ENCODE measurements at regions of chr15 and their contacts with region 1.

Region 1: DNA sequence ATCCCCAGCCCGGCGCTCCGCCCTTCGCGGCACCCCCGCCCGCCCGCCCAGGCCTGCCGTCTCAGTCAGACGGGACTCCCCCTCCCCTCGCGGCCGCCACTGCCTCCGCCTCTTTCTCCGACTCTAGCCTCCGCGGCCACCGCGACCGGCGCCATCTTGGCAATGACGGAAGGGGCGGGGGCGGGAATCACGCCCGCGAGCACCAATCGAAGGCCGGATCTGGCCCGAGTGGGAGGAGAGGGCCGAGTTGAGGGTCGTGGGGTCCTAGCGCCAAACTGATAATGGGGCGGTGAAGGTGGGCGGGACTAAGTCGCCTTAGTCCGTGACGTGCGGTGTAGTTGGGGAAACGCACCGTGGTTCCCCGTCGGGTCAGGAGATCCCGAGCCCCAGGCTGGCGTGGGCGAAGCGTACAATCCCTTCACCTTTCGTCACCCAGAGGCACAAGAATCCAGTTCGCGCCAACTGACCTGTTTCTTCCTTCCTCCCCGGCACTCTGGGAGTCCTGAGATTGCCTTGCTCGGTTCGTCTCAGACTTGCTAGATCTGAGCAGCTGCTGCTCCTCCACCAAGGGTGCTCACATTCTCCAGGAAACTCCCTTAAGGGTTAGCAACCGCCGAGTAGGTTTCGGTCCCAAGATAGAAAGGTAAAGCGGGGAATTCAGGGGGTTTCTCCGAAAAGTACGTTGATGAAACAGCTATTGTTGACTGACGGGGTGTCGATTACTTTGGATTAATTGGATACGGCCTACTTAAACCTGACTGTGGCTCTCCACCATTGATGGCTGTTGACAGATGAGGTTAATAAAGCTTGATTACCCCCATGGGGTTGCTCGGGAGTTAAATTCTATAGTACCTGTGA is at the start of gene DENND4A:
- DNase-seq: peak; percentile 100
- H3K4me3 Mint-ChIP-seq: peak within 1 kb of the TSS; percentile 91
- H3K27ac Mint-ChIP-seq: peak within 1 kb of the TSS; percentile 99
- H3K4me1 Mint-ChIP-seq: peaks cover 56% of the 10 kb centered on the region
- H3K27me3 Mint-ChIP-seq: no peaks in the 10 kb centered on the region
- total RNA-seq, gene DENND4A: 44.2 and 48.3 TPM in 2 replicates

Region 2: GRCh38 chr15:65292938-65293518 is 499.3 kb before region 1 on chr15:
- intact Hi-C with region 1: loop called (anchors 10 kb)
- DNase-seq: no peak
- H3K4me3 Mint-ChIP-seq: no peak overlapping the region
- H3K27ac Mint-ChIP-seq: no peak overlapping the region
- H3K4me1 Mint-ChIP-seq: peaks cover 26% of the 10 kb centered on the region
- H3K27me3 Mint-ChIP-seq: no peaks in the 10 kb centered on the region

Region 3: DNA sequence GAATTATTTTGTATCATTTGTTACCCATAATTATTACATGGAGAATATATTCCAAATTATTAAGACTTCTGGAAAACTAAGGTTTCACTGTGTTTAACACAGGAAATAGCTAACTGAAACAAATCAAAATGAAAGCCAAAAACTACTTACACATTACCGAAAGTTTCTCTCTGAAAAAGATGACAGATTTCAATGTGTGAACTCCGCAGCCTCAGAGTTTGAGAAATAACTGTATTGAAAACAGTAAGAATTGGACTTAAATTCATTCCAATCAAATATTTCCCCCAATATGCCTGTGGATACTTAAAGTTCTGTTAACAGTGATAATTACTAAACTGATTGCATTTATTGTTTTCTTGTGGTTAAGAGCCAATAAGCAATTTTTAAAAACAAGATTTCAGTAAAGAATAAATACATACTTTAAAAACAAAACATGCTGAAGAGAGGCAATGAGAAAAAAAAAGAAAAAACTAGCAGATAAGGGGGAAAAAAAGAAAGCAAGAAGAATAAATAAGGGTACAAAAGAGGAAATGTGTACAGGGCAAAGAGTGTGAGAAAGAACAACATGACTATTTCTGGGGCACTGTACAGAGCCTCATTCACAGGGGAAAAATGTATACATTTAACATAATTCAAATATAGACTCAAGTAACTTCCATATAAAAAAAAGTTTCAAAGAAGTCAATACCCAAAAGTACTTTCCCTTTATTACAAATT is 31.0 kb before region 1 on chr15:
- intact Hi-C with region 1: loop called (anchors 2 kb)
- DNase-seq: no peak
- H3K4me3 Mint-ChIP-seq: peak overlapping the region; percentile 62
- H3K27ac Mint-ChIP-seq: peak overlapping the region; percentile 62
- H3K4me1 Mint-ChIP-seq: peaks cover 14% of the 10 kb centered on the region
- H3K27me3 Mint-ChIP-seq: no peaks in the 10 kb centered on the region

Region 4: DNA sequence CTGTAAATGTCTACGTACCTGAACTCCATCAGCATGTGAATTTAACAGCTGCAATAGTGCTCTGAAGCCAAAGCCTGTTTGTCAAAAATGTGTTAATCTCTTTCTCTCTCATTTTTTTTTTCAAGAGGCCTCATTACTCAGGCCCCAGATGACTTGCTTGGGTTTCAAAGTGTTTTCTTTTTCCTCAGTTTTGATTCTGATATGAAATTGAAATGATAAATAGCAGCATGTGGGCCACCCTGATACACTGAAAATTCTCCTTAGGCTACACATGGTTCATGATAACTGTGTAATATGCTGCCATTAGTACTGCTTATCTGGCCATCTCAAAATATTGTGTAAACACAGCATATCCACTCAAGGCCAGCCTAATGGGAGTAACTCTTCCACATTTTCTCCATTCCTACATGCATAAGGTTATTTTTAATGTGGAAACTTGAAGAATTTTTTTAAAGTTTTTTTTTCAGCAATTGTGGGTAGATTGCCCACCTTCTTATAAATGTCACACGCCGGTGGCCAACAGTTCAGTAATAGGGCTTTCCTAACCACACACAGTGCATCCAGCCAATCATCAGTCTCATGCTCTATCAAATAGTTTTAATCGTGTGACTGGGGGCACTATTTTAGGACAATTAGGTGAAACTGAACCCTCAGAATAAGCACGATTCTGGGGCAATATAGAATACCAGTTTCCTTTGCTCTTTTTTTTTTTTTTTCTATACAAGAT is 12.8 kb after region 1 on chr15:
- intact Hi-C with region 1: loop called (anchors 1 kb)
- DNase-seq: no peak
- H3K4me3 Mint-ChIP-seq: no peak overlapping the region
- H3K27ac Mint-ChIP-seq: peak overlapping the region; percentile 66
- H3K4me1 Mint-ChIP-seq: peaks cover 33% of the 10 kb centered on the region
- H3K27me3 Mint-ChIP-seq: no peaks in the 10 kb centered on the region

Region 5: DNA sequence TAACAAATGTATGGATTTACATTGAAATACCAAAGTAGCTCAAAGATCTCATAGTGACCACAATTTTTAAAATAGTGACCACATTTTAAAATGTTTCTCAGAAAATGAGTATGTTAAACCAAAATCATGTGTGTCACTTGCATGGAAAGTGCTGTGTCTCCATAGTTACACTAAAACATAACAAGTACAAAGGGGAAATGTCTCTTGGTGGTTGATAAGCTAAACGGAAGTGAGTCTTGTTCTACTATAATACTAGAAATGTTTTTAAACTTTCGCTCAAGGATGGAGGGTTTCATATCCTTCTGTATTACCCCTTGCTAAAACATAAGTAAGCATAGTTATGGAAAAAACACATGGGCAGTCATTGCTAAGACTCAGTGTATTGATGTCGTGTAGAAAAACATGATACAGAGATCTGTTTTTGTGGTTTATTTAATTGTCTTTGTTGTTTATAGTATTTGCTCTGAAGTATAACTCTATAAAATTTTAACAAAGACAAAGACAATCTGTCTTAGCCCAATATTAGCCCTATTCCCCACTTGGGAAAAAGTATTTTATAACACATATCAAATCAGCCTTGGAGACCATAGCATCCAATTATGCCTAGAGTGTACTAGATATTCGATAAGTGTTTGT is 26.7 kb after region 1 on chr15:
- intact Hi-C with region 1: loop called (anchors 1 kb)
- DNase-seq: peak; percentile 81
- H3K4me3 Mint-ChIP-seq: peak overlapping the region; percentile 61
- H3K27ac Mint-ChIP-seq: peak overlapping the region; percentile 85
- H3K4me1 Mint-ChIP-seq: peaks cover 44% of the 10 kb centered on the region
- H3K27me3 Mint-ChIP-seq: no peaks in the 10 kb centered on the region

Region 6: DNA sequence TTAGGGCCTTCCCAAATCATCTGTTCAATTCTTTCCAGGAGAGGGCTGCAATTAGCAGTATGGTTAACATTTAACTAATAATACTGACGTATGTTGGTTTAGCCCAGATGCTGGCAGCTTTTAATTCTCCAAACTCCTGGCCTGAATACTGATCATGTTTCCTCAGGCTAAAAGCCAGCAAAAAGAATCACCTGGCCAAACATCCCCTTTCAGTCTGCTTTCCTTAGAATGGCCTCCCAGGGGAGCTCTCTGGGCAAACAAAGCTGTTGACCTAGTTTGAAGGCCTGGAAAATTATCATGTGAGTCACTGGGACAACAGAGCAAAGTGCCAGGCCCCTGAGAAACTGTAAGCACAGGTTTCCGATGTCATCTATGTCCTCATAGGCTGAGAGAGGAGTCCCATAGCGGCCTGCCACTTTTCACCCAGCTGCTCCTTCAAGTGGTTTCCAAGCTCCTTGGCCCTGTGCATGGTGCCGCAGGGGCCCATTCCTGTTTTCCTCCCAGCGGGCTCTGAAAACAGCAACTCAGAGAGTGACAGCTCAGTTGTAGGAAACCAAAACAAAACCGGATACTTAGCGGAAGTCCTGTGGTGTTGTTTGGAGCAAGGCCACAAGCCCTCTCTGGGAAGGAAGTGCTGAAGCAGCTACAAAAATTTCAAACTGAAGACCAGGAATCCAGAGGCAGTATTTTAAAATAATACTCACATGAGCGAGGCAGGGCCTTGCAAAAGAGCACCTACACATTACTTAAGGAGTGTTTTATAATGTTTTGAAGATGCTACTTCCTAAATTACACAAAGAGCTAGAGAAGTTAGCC is 40.4 kb after region 1 on chr15:
- intact Hi-C with region 1: loop called (anchors 1 kb)
- DNase-seq: peak; percentile 90
- H3K4me3 Mint-ChIP-seq: peak overlapping the region; percentile 84
- H3K27ac Mint-ChIP-seq: peak overlapping the region; percentile 99
- H3K4me1 Mint-ChIP-seq: peaks cover 48% of the 10 kb centered on the region
- H3K27me3 Mint-ChIP-seq: no peaks in the 10 kb centered on the region

Region 7: DNA sequence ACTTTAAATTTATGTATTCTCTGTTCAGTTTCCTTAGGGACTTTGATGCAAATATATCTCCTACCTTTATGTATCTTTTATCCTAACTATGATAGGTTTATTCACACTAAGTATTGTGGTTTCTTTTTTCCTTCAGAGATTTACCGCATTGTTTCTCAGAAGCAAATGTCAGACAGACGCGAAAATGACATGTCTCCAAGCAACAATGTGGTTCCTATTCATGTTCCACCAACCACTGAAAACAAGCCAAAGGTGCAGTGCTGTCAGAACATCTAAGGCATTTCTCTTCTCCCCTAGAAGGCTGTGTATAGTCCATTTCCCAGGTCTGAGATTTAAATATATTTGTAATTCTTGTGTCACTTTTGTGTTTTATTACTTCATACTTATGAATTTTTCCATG is 95.2 kb after region 1 on chr15:
- intact Hi-C with region 1: loop called (anchors 1 kb)
- DNase-seq: peak; percentile 91
- H3K4me3 Mint-ChIP-seq: peak overlapping the region; percentile 66
- H3K27ac Mint-ChIP-seq: peak overlapping the region; percentile 90
- H3K4me1 Mint-ChIP-seq: peaks cover 66% of the 10 kb centered on the region
- H3K27me3 Mint-ChIP-seq: no peaks in the 10 kb centered on the region